SK-N-SH (cell line): ENCODE measurements at regions of chr10 and their contacts with region 1.

Region 1: GRCh38 chr10:71383972-71384687 is 12.6 kb upstream of the CDH23 start:
- DNase-seq: peak; percentile 84
- H3K4me3 ChIP-seq: no peak overlapping the region; a peak in 1 of 4 replicates
- H3K27ac ChIP-seq: no peak overlapping the region
- H3K4me1 ChIP-seq: no peaks in the 10 kb centered on the region
- H3K27me3 ChIP-seq: peaks cover 30% of the 10 kb centered on the region; the same call in 1 of the 2 replicates
- CTCF ChIP-seq: peak; percentile 89
- EP300 ChIP-seq: no peak
- RAD21 ChIP-seq: peak; percentile 80

Region 2: DNA sequence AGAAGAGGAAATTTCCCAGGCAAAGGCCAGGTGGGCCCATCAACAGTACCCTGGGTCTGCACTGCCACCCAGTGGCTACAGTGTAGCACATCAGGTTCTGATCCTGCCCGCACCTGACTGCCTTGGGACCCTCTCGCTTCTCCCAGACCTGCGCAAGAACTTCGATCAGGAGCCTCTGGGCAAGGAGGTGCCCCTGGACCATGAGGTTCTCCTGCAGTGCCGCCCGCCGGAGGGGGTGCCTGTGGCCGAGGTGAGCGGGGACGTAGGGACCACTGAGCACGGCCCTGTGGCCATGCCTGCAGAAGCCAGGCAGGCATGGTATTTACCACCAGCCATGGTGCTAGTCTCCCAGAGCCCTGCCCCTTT is 99.0 kb before region 1 on chr10:
- CTCF ChIA-PET with region 1: no interaction called
- POLR2A ChIA-PET with region 1: no interaction called
- DNase-seq: peak; percentile 85
- H3K4me3 ChIP-seq: no peak overlapping the region
- H3K27ac ChIP-seq: no peak overlapping the region; a peak in 1 of 4 replicates
- H3K4me1 ChIP-seq: peaks cover 0 to 22% of the 10 kb centered on the region in 2 experiments; a peak in 2 of 4 replicates
- H3K27me3 ChIP-seq: no peaks in the 10 kb centered on the region
- CTCF ChIP-seq: peak; percentile 76
- EP300 ChIP-seq: no peak
- RAD21 ChIP-seq: peak; percentile 83

Region 3: DNA sequence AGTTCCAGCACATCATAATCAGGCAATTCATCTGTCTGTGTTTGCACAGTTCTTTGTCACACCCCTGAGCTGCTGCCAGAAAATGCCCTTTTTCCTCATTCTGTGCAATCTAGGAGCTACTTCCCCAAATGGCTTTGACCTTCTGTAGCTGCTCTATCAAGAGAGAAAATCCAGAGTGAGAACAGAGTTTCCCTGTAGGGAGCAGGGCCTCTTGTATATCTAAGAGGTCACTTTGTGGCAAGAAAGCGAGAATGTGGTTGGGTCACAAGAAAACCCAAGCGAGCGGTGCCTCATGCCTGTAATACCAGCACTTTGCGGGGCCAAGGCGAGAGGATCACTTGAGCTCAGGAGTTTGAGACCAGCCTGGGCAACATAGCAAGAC is 40.7 kb before region 1 on chr10:
- CTCF ChIA-PET with region 1: interaction called, 11 read pairs
- POLR2A ChIA-PET with region 1: no interaction called
- DNase-seq: no peak
- H3K4me3 ChIP-seq: no peak overlapping the region
- H3K27ac ChIP-seq: no peak overlapping the region
- H3K4me1 ChIP-seq: peaks cover 0 to 25% of the 10 kb centered on the region in 2 experiments; a peak in 1 of 4 replicates
- H3K27me3 ChIP-seq: no peaks in the 10 kb centered on the region
- CTCF ChIP-seq: no peak
- EP300 ChIP-seq: no peak
- RAD21 ChIP-seq: no peak

Region 4: DNA sequence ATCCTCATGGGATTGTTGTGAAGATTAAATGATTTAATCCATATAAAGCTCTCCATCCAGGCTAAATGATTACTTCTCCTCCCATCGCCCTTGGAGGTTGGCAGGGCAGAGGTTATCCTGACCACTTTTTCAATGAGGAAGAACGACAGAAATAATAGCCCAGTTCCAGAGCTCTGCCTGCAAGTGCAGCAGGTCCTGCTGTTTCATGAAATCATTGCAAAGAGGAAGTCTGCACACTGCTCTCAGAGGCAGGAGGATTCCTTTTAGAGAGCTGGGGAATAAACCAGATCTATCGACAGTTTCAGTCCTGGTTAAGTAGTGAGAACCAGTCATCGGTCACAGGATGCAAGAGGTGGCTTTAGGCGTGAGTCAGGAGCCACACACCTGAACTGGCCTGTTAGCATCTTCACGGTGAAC is 12.4 kb before region 1 on chr10:
- CTCF ChIA-PET with region 1: interaction called, 47 read pairs
- POLR2A ChIA-PET with region 1: interaction called, 3 read pairs
- DNase-seq: no peak
- H3K4me3 ChIP-seq: no peak overlapping the region
- H3K27ac ChIP-seq: no peak overlapping the region
- H3K4me1 ChIP-seq: peaks cover 0 to under 1% of the 10 kb centered on the region in 2 experiments; a peak in 1 of 4 replicates
- H3K27me3 ChIP-seq: no peaks in the 10 kb centered on the region; the same call in 1 of the 2 replicates
- CTCF ChIP-seq: no peak
- EP300 ChIP-seq: no peak
- RAD21 ChIP-seq: no peak

Region 5: GRCh38 chr10:71615538-71616329 is 231.6 kb after region 1 on chr10:
- CTCF ChIA-PET with region 1: interaction called, 57 read pairs
- POLR2A ChIA-PET with region 1: no interaction called
- DNase-seq: no peak
- H3K4me3 ChIP-seq: no peak overlapping the region
- H3K27ac ChIP-seq: no peak overlapping the region
- H3K4me1 ChIP-seq: peaks cover 0 to 9% of the 10 kb centered on the region in 2 experiments; a peak in 1 of 4 replicates
- H3K27me3 ChIP-seq: 0 out of 2 replicates have a peak, but pooled peaks cover 4% of the 10 kb centered on the region
- CTCF ChIP-seq: no peak
- EP300 ChIP-seq: no peak
- RAD21 ChIP-seq: no peak